ENCODE measurements at regions of chr9 and their contacts with region 1.

Region 1: GRCh38 chr9:3299872-3300271 is 225.9 kb downstream of the RFX3 start:
- DNase-seq: no peak
- ATAC-seq: no peak
- H3K4me3 ChIP-seq: no peak overlapping the region
- H3K27ac ChIP-seq: no peak overlapping the region
- H3K4me1 ChIP-seq: no peaks in the 10 kb centered on the region
- H3K27me3 ChIP-seq: no peaks in the 10 kb centered on the region
- CTCF ChIP-seq: no peak
- POLR2A ChIP-seq: no peak

Region 2: GRCh38 chr9:3181049-3181953 is 118.6 kb before region 1 on chr9:
- in situ Hi-C with region 1: loop called in 1 of 4 experiments (anchors 25 kb)
- intact Hi-C with region 1: no loop called
- DNase-seq: no peak
- ATAC-seq: no peak
- H3K4me3 ChIP-seq: peak overlapping the region in 3 of 4 donors; percentile 16 to 38 (median 37)
- H3K27ac ChIP-seq: no peak overlapping the region
- H3K4me1 ChIP-seq: peaks cover 0 to 2% of the 10 kb centered on the region in 2 donors
- H3K27me3 ChIP-seq: peaks cover 7 to 20% (median 11%) of the 10 kb centered on the region in 3 donors
- CTCF ChIP-seq: no peak
- POLR2A ChIP-seq: no peak

Region 3: DNA sequence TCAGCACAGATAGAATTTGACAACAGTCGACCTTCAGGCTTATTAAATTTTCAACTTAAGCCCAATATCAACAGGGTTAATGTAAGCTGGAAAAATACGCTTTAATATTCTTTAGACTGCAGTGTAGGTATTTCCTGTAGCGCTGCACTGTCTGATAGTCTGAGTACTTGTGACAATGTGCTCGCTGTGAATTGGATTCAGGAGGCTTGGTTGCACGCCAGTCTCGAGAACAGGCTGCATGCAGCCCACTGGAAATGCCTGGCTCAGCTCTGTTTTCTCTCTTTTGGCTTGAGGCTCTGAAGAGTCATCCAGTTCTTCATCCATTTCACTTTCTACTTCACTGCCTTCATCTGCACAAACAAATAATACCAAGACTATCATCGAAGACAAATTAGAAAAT is 74.9 kb before region 1 on chr9:
- in situ Hi-C with region 1: loop called in 1 of 4 experiments (anchors 25 kb)
- intact Hi-C with region 1: no loop called
- DNase-seq: no peak
- ATAC-seq: no peak
- H3K4me3 ChIP-seq: no peak overlapping the region
- H3K27ac ChIP-seq: no peak overlapping the region
- H3K4me1 ChIP-seq: no peaks in the 10 kb centered on the region
- H3K27me3 ChIP-seq: no peaks in the 10 kb centered on the region
- CTCF ChIP-seq: no peak
- POLR2A ChIP-seq: no peak

Measured in gastrocnemius medialis (tissue), 4 donors.